ENCODE measurements at regions of chr2 and their contacts with region 1.

Region 1: GRCh38 chr2:60881047-60881932 is at the start of gene REL:
- DNase-seq: peak; percentile 97
- H3K4me3 Mint-ChIP-seq: peak within 1 kb of the TSS; percentile 97
- H3K27ac Mint-ChIP-seq: peak within 1 kb of the TSS; percentile 97
- H3K4me1 Mint-ChIP-seq: peaks cover 21% of the 10 kb centered on the region
- H3K27me3 Mint-ChIP-seq: no peaks in the 10 kb centered on the region
- total RNA-seq, gene REL: 84.9 and 88.7 TPM in 2 replicates

Region 2: GRCh38 chr2:60756191-60757041 is 124.9 kb before region 1 on chr2 and contains the start of gene PAPOLG:
- intact Hi-C with region 1: loop called (anchors 1 kb)
- DNase-seq: peak; percentile 99
- H3K4me3 Mint-ChIP-seq: peak within 1 kb of the TSS; percentile 97
- H3K27ac Mint-ChIP-seq: peak within 1 kb of the TSS; percentile 99
- H3K4me1 Mint-ChIP-seq: peaks cover 29% of the 10 kb centered on the region
- H3K27me3 Mint-ChIP-seq: no peaks in the 10 kb centered on the region
- total RNA-seq, gene PAPOLG: 18.1 and 21.6 TPM in 2 replicates

Region 3: GRCh38 chr2:60818272-60818671 is 63.0 kb before region 1 on chr2:
- intact Hi-C with region 1: loop called (anchors 1 kb)
- DNase-seq: no peak
- H3K4me3 Mint-ChIP-seq: peak overlapping the region; percentile 61
- H3K27ac Mint-ChIP-seq: peak overlapping the region; percentile 91
- H3K4me1 Mint-ChIP-seq: peaks cover 51% of the 10 kb centered on the region
- H3K27me3 Mint-ChIP-seq: no peaks in the 10 kb centered on the region

Region 4: DNA sequence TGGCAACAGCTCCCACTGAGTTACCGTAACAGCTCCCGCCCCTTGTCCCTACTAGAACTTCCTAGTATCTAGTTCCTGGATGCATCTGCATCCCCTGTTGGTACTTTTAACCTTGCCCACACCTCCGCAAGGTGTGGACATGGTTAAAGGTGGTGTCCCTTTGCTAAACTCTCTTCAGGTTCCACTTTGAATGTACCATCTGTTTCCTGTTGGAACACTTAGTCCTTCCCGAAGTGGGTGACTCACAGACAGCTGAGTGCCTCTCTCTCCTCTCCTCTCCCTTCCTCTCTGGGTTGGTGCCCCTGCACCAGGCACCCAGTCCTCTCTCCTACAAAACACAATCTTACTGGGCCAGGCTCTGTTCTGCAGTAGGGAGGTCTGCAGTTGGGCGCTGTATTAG is 19.6 kb before region 1 on chr2:
- intact Hi-C with region 1: no loop called
- DNase-seq: no peak
- H3K4me3 Mint-ChIP-seq: no peak overlapping the region
- H3K27ac Mint-ChIP-seq: no peak overlapping the region
- H3K4me1 Mint-ChIP-seq: peaks cover 8% of the 10 kb centered on the region
- H3K27me3 Mint-ChIP-seq: peaks cover 2% of the 10 kb centered on the region

Region 5: DNA sequence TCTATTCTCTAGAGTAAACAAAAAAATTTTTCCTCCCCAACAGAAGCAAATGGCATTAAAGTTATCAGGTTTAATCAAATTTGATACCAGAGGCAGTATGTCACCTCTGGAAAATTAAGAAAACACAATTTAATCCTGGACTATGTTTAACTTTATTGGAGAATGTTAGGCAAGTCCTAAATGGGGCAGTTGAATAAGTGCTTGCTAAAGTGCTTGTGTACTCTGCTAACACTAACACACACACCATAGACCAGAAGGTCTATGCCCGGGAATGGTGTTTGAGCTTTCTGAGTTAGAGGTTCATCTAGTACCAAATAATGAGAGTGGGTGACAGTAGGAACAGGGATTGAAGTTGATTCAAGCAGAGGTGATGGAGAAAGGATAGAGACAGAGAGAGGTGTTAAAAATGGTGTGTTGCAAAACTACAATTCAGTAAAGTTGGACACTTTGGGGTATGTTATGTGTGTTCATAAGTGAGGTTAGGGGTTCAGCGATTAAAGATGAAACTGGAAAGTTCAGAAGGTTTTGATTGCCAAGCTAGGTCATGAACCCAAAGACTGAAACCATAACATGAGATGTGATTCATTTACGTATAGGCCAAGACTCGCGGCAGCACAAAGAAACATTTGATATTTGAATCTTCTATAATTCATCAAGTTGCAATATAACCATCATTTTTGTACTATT is 95.7 kb after region 1 on chr2:
- intact Hi-C with region 1: loop called (anchors 2 kb)
- DNase-seq: no peak
- H3K4me3 Mint-ChIP-seq: no peak overlapping the region
- H3K27ac Mint-ChIP-seq: peak overlapping the region; percentile 46
- H3K4me1 Mint-ChIP-seq: peaks cover 30% of the 10 kb centered on the region
- H3K27me3 Mint-ChIP-seq: no peaks in the 10 kb centered on the region

Region 6: GRCh38 chr2:61176755-61177726 is 295.8 kb after region 1 on chr2:
- intact Hi-C with region 1: loop called (anchors 5 kb)
- DNase-seq: peak; percentile 99
- H3K4me3 Mint-ChIP-seq: peak overlapping the region; percentile 90
- H3K27ac Mint-ChIP-seq: peak overlapping the region; percentile 82
- H3K4me1 Mint-ChIP-seq: peaks cover 50% of the 10 kb centered on the region
- H3K27me3 Mint-ChIP-seq: peaks cover 9% of the 10 kb centered on the region